MCF 10A (cell line): ENCODE measurements at regions of chr1 and their contacts with region 1.

Region 1: DNA sequence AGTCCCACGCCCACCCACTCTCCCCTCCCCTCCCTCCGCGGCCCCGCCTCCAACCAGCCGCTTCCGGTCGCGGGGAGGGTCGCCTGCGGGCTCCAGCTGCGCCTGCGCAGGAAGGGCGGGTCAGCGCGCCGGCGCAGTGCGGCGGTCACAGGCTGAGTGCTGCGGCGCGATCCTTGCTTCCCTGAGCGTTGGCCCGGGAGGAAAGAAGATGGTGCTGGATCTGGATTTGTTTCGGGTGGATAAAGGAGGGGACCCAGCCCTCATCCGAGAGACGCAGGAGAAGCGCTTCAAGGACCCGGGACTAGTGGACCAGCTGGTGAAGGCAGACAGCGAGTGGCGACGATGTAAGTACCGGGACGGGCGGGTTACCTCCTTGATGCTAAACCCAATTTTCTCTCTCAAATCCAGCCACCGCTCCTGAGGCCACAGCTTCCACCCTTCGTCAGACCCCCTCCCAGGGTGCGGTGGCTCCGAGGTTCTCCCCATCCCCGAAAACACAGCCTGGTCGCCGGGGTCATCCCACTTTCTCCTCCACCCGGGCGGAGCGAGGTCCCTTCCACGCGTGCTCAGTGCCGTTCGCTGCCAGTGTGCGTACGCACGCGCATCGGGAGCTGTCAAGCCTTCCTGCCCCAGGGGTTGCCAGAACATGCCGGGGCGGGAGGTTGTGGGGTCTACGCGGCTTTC is at the start of gene SARS1:
- DNase-seq: peak; percentile 85
- H3K4me3 Mint-ChIP-seq: peak within 1 kb of the TSS; percentile 98
- H3K27ac Mint-ChIP-seq: peak within 1 kb of the TSS; percentile 98
- H3K4me1 Mint-ChIP-seq: peaks cover 33% of the 10 kb centered on the region
- H3K27me3 Mint-ChIP-seq: no peaks in the 10 kb centered on the region
- CTCF ChIP-seq: no peak
- total RNA-seq, gene SARS1: 381 and 492 TPM in 2 replicates

Region 2: GRCh38 chr1:108963052-108963686 is 250.8 kb before region 1 on chr1 and contains the start of gene CLCC1:
- CTCF ChIA-PET with region 1: no interaction called
- POLR2A ChIA-PET with region 1: interaction called, 13 read pairs
- intact Hi-C with region 1: no loop called
- DNase-seq: peak; percentile 94
- H3K4me3 Mint-ChIP-seq: peak within 1 kb of the TSS; percentile 86
- H3K27ac Mint-ChIP-seq: peak within 1 kb of the TSS; percentile 83
- H3K4me1 Mint-ChIP-seq: peaks cover 18% of the 10 kb centered on the region
- H3K27me3 Mint-ChIP-seq: no peaks in the 10 kb centered on the region
- CTCF ChIP-seq: no peak
- total RNA-seq, gene CLCC1: 36.6 and 46.3 TPM in 2 replicates

Region 3: GRCh38 chr1:109090196-109091077 is 123.5 kb before region 1 on chr1 and contains the start of gene TMEM167B:
- CTCF ChIA-PET with region 1: interaction called, 4 read pairs
- POLR2A ChIA-PET with region 1: interaction called, 24 read pairs
- intact Hi-C with region 1: no loop called
- DNase-seq: peak; percentile 91
- H3K4me3 Mint-ChIP-seq: peak within 1 kb of the TSS; percentile 80
- H3K27ac Mint-ChIP-seq: peak within 1 kb of the TSS; percentile 96
- H3K4me1 Mint-ChIP-seq: peaks cover 12% of the 10 kb centered on the region
- H3K27me3 Mint-ChIP-seq: no peaks in the 10 kb centered on the region
- CTCF ChIP-seq: no peak
- total RNA-seq, gene TMEM167B: 30.2 and 34.3 TPM in 2 replicates

Region 4: GRCh38 chr1:109161858-109162606 is 51.9 kb before region 1 on chr1:
- CTCF ChIA-PET with region 1: interaction called, 4 read pairs
- POLR2A ChIA-PET with region 1: interaction called, 12 read pairs
- intact Hi-C with region 1: no loop called
- DNase-seq: peak; percentile 79
- H3K4me3 Mint-ChIP-seq: peak overlapping the region; percentile 21
- H3K27ac Mint-ChIP-seq: peak overlapping the region; percentile 72
- H3K4me1 Mint-ChIP-seq: peaks cover 9% of the 10 kb centered on the region
- H3K27me3 Mint-ChIP-seq: no peaks in the 10 kb centered on the region
- CTCF ChIP-seq: no peak

Region 5: DNA sequence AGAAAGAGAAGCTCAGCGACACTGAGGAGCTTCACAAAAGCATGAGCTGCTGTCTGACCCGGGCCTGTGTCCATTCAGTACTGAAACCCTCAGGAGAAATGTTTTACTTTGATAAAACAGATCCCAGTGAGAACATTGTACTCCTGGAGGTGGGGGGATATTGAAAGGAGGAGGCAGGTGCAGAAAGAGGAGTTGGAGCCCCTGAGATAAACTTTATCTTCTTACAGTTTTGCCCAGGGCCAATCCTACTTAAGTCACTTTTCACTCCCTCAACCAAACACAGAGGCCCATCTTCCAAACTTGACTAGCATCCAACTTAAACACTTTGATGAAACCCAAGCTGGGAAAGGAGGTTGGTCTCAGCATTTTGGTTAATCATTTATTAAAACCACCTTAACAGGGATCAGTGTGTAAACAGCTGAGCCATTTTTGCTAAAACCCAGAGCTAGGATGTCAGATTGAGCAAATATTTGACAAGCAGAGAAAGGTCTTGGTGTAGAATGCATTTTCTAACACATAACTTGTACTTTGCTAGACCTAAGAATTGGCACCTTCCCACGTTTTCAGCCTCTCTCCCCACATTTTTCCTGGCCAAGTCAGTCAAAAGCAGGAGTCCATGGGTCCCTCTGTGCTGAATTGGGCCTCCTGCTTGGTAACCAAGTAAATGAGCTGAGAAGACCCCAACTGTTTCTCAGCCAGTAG is 32.7 kb before region 1 on chr1:
- CTCF ChIA-PET with region 1: no interaction called
- POLR2A ChIA-PET with region 1: no interaction called
- intact Hi-C with region 1: no loop called
- DNase-seq: no peak
- H3K4me3 Mint-ChIP-seq: no peak overlapping the region
- H3K27ac Mint-ChIP-seq: no peak overlapping the region
- H3K4me1 Mint-ChIP-seq: peaks cover 11% of the 10 kb centered on the region
- H3K27me3 Mint-ChIP-seq: no peaks in the 10 kb centered on the region
- CTCF ChIP-seq: no peak

Region 6: GRCh38 chr1:109201123-109201703 is 12.7 kb before region 1 on chr1:
- CTCF ChIA-PET with region 1: interaction called, 95 read pairs
- POLR2A ChIA-PET with region 1: interaction called, 69 read pairs
- intact Hi-C with region 1: no loop called
- DNase-seq: peak; percentile 93
- H3K4me3 Mint-ChIP-seq: no peak overlapping the region
- H3K27ac Mint-ChIP-seq: no peak overlapping the region
- H3K4me1 Mint-ChIP-seq: peaks cover 28% of the 10 kb centered on the region
- H3K27me3 Mint-ChIP-seq: no peaks in the 10 kb centered on the region
- CTCF ChIP-seq: peak; percentile 76

Region 7: GRCh38 chr1:109239580-109240095 is 25.7 kb after region 1 on chr1:
- CTCF ChIA-PET with region 1: interaction called, 7 read pairs
- POLR2A ChIA-PET with region 1: interaction called, 68 read pairs
- intact Hi-C with region 1: no loop called
- DNase-seq: peak; percentile 75
- H3K4me3 Mint-ChIP-seq: peak overlapping the region; percentile 2
- H3K27ac Mint-ChIP-seq: peak overlapping the region; percentile 69
- H3K4me1 Mint-ChIP-seq: peaks cover 23% of the 10 kb centered on the region
- H3K27me3 Mint-ChIP-seq: no peaks in the 10 kb centered on the region
- CTCF ChIP-seq: peak; percentile 52

Region 8: GRCh38 chr1:109295712-109296415 is 81.9 kb after region 1 on chr1:
- CTCF ChIA-PET with region 1: no interaction called
- POLR2A ChIA-PET with region 1: no interaction called
- intact Hi-C with region 1: no loop called
- DNase-seq: no peak
- H3K4me3 Mint-ChIP-seq: no peak overlapping the region
- H3K27ac Mint-ChIP-seq: no peak overlapping the region
- H3K4me1 Mint-ChIP-seq: peaks cover 17% of the 10 kb centered on the region
- H3K27me3 Mint-ChIP-seq: no peaks in the 10 kb centered on the region
- CTCF ChIP-seq: no peak

Region 9: DNA sequence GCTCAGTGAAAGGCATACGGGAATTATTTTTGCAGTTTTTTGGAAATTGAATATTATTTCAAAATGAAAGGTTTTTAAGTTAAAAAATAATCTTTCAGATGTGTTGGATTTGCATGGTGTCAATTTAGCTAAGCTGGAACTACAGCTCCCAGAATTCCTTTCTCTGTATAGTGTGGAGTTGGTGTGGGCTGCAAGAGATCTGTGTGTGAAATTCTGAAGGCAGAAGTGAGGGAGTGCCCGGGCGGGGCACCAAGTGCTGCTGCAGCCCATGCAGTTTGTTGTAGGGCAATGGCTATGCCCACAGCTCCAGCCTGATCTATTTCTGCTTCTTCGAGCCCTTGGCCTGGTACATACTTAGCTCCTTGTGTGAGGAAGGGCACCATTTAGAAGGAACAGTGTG is 636.3 kb after region 1 on chr1:
- CTCF ChIA-PET with region 1: no interaction called
- POLR2A ChIA-PET with region 1: no interaction called
- intact Hi-C with region 1: no loop called
- DNase-seq: peak; percentile 33
- H3K4me3 Mint-ChIP-seq: no peak overlapping the region
- H3K27ac Mint-ChIP-seq: no peak overlapping the region
- H3K4me1 Mint-ChIP-seq: peaks cover 12% of the 10 kb centered on the region
- H3K27me3 Mint-ChIP-seq: no peaks in the 10 kb centered on the region
- CTCF ChIP-seq: no peak